Naive thymus-derived CD4-positive, alpha-beta T cell (primary cell): ENCODE measurements at regions of chr12 and their contacts with region 1.

Region 1: GRCh38 chr12:49188914-49189367 is at the start of gene TUBA1A:
- DNase-seq: peak; percentile 80 to 99 (median 98)
- ATAC-seq: peak; percentile 93
- H3K4me3 ChIP-seq: peak within 1 kb of the TSS; percentile 91
- H3K4me3 Mint-ChIP-seq: peak within 1 kb of the TSS; percentile 94 to 99 (median 98)
- H3K27ac ChIP-seq: peak within 1 kb of the TSS; percentile 99
- H3K27ac Mint-ChIP-seq: peak within 1 kb of the TSS; percentile 98 to 100 (median 99)
- H3K4me1 ChIP-seq: peaks cover 7 to 12% of the 10 kb centered on the region in 2 donors
- H3K4me1 Mint-ChIP-seq: peaks cover 11 to 32% (median 26%) of the 10 kb centered on the region in 7 donors
- H3K27me3 ChIP-seq: no peaks in the 10 kb centered on the region
- H3K27me3 Mint-ChIP-seq: peaks cover 0 to 5% (median 0%) of the 10 kb centered on the region in 5 donors
- total RNA-seq, gene TUBA1A: 61.8 to 492 (median 98.8) TPM

Region 2: DNA sequence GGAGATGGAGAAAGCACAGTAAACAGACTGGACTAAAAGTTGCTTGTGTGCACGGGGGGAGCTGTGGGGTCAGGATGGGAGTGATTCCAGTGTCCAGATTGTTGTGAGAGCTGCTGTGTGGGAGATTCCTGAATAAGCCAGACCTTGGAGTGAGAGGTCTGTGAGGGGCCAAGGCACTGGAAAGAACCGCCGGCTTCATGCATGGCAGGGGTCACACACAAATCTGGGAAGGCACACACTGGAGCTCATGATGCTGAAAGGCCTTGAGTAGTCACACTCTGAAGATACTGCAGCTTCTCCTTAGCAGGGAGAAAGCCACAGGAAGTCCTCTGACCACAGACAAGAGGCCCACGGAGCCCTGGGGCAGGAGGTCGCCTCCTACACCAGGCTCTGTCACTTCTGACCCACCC is 423.2 kb before region 1 on chr12:
- CTCF ChIA-PET with region 1: no interaction called
- POLR2A ChIA-PET with region 1: no interaction called
- intact Hi-C with region 1: no loop called
- DNase-seq: peak in 1 of 9 donors; percentile 44
- ATAC-seq: peak; percentile 69
- H3K4me3 ChIP-seq: no peak overlapping the region
- H3K4me3 Mint-ChIP-seq: peak overlapping the region in 1 of 10 donors; percentile 62
- H3K27ac ChIP-seq: no peak overlapping the region
- H3K27ac Mint-ChIP-seq: no peak overlapping the region
- H3K4me1 ChIP-seq: no peaks in the 10 kb centered on the region
- H3K4me1 Mint-ChIP-seq: peaks cover 0 to 21% (median 10%) of the 10 kb centered on the region in 7 donors
- H3K27me3 ChIP-seq: no peaks in the 10 kb centered on the region
- H3K27me3 Mint-ChIP-seq: peaks cover 0 to 9% (median 0%) of the 10 kb centered on the region in 5 donors

Region 3: DNA sequence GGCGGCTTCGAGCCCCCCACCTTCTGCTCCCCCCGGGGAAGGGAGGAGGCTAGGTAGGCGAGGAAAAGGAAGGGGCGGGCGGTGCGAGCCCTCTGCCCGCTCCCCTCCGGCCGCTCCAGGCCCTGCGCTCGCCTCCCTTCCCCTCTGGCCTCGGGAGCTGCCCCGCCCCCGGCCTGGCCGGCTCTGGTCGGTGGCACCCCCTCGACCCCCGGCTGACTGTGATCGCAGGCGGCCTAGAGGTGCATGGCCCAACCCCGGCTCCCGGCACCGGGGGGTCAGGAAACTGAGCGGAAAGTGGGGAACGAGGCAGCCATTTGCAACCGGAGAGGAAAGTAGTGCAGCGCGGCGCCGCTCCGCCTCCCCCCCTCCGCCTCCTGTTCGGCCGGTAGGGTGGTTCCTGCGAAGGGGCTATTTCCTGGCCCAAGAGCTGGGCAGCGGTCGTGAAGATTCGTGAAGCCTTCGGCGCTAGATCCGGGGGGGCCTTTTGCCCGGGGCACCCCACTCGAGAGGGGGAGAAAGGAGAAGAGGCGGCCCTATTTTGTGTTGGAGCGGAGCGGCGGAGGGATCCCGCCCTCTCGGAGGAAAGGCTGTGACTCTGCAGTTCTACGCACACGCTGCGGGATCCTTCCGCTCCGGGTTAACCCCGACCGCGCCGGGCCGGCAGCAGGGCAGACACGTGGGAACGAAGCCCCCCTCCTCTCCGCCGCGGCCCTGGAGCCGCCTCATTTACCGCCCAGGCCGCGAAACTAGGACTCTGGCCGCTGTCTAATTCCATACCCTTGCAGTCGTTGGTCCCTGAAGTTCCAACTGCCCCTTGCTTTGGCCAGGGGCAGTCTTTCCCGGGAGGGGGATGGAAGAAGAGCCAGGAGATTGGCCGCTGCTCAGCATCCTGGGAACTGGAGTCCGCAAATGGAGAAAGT is 128.4 kb before region 1 on chr12 and contains the start of gene KMT2D:
- CTCF ChIA-PET with region 1: interaction called, 3 read pairs
- POLR2A ChIA-PET with region 1: interaction called, 4 read pairs
- intact Hi-C with region 1: loop called (anchors 1 to 5 kb)
- DNase-seq: peak; percentile 80 to 94 (median 91)
- ATAC-seq: peak; percentile 86
- H3K4me3 ChIP-seq: peak within 1 kb of the TSS; percentile 87
- H3K4me3 Mint-ChIP-seq: peak within 1 kb of the TSS; percentile 91 to 98 (median 95)
- H3K27ac ChIP-seq: peak within 1 kb of the TSS; percentile 87
- H3K27ac Mint-ChIP-seq: peak within 1 kb of the TSS; percentile 90 to 99 (median 97)
- H3K4me1 ChIP-seq: peaks cover 38 to 40% of the 10 kb centered on the region in 2 donors
- H3K4me1 Mint-ChIP-seq: peaks cover 44 to 55% (median 51%) of the 10 kb centered on the region in 7 donors
- H3K27me3 ChIP-seq: no peaks in the 10 kb centered on the region
- H3K27me3 Mint-ChIP-seq: no peaks in the 10 kb centered on the region
- total RNA-seq, gene KMT2D: 129 to 167 (median 151) TPM

Region 4: DNA sequence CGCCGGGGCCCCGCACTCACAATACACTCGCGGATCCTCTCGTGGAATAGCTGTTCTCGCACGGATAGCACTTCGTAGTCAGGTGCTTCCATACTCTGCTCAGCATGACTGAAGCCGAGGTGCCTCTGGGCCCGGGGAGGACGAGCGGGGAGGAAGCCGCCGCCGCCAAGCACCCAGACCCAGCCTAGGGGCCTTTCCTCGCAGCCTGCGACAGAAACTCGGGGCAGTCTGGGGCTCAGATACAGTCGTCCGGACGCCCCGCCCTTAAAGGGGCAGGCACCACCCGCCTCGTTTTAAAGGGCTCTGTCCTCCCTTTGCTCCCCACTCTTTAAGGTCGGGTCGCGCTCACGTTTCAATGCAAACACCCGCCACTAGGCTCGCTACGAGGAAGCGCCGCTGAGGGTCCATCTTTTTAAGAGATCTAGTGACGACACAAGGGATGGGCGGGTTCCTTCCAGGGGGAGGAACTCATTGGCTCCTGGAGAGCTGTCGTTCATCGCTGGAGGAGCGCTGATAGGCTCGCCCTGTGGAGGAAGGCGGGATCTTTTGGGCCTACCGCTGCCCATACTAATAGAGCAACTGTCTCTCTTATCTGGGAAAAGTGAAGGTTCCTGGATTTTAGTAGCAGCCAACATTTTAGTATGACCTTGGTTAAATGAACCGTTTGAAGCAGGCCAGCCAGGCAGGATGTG is 78.3 kb before region 1 on chr12 and contains the start of gene LMBR1L:
- CTCF ChIA-PET with region 1: interaction called, 3 read pairs
- POLR2A ChIA-PET with region 1: interaction called, 47 read pairs
- intact Hi-C with region 1: loop called (anchors 1 kb)
- DNase-seq: peak; percentile 76 to 98 (median 96)
- ATAC-seq: peak; percentile 96
- H3K4me3 ChIP-seq: peak within 1 kb of the TSS; percentile 76
- H3K4me3 Mint-ChIP-seq: peak within 1 kb of the TSS; percentile 95 to 100 (median 98)
- H3K27ac ChIP-seq: peak within 1 kb of the TSS; percentile 95
- H3K27ac Mint-ChIP-seq: peak within 1 kb of the TSS; percentile 96 to 99 (median 99)
- H3K4me1 ChIP-seq: peaks cover 14 to 19% of the 10 kb centered on the region in 2 donors
- H3K4me1 Mint-ChIP-seq: peaks cover 14 to 48% (median 44%) of the 10 kb centered on the region in 7 donors
- H3K27me3 ChIP-seq: no peaks in the 10 kb centered on the region
- H3K27me3 Mint-ChIP-seq: no peaks in the 10 kb centered on the region
- total RNA-seq, gene LMBR1L: 67.4 to 328 (median 263) TPM

Region 5: DNA sequence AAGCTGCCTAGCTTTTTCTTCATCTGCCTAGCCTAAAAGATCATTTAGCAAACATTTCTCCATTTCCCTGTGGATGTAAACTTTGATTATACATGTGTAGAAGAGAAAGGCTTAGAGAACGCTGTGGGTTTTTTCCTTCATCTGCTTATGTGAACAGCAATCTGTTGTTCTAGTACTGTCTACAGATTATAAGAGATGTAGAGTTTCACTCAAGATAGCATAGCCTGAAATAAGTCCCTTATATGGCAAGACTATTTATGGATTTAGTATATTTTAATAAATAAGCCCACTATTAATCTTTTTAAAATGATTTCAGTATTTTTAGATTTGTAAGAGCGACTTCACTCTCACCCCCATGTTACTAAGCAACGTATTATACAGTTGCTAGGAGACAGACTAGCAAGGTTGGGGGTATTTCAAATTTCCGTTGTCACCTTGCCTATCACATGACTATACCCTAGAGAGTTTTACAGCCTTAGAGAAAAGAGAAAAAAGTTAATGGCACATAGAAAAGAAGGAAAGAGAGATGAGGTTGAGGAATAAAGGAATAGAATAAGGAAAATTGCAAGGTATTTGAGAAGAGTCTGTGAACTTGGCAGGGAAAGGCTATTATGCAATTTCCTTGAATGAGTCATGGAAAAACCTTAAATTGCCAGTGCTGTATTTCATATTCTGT is 12.1 kb after region 1 on chr12:
- CTCF ChIA-PET with region 1: no interaction called
- POLR2A ChIA-PET with region 1: interaction called, 21 read pairs
- intact Hi-C with region 1: loop called (anchors 1 kb)
- DNase-seq: peak in 6 of 9 donors; percentile 30 to 64 (median 46)
- ATAC-seq: peak; percentile 92
- H3K4me3 ChIP-seq: no peak overlapping the region
- H3K4me3 Mint-ChIP-seq: no peak overlapping the region
- H3K27ac ChIP-seq: no peak overlapping the region
- H3K27ac Mint-ChIP-seq: peak overlapping the region in 4 of 9 donors; percentile 4 to 75 (median 22)
- H3K4me1 ChIP-seq: peaks cover 0 to 6% of the 10 kb centered on the region in 2 donors
- H3K4me1 Mint-ChIP-seq: peaks cover 7 to 15% (median 14%) of the 10 kb centered on the region in 7 donors
- H3K27me3 ChIP-seq: no peaks in the 10 kb centered on the region
- H3K27me3 Mint-ChIP-seq: peaks cover 0 to 19% (median 0%) of the 10 kb centered on the region in 5 donors

Region 6: GRCh38 chr12:49322708-49323523 is 134.0 kb after region 1 on chr12 and contains the start of gene TROAP:
- CTCF ChIA-PET with region 1: no interaction called
- POLR2A ChIA-PET with region 1: no interaction called
- intact Hi-C with region 1: loop called in 1 of 2 experiments (anchors 2 kb)
- DNase-seq: peak; percentile 89 to 98 (median 96)
- ATAC-seq: peak; percentile 97
- H3K4me3 ChIP-seq: peak within 1 kb of the TSS; percentile 75
- H3K4me3 Mint-ChIP-seq: peak within 1 kb of the TSS; percentile 86 to 98 (median 92)
- H3K27ac ChIP-seq: peak within 1 kb of the TSS; percentile 72
- H3K27ac Mint-ChIP-seq: peak within 1 kb of the TSS; percentile 29 to 95 (median 83)
- H3K4me1 ChIP-seq: peaks cover 5 to 14% of the 10 kb centered on the region in 2 donors
- H3K4me1 Mint-ChIP-seq: peaks cover 16 to 25% (median 19%) of the 10 kb centered on the region in 7 donors
- H3K27me3 ChIP-seq: no peaks in the 10 kb centered on the region
- H3K27me3 Mint-ChIP-seq: peaks cover 0 to 5% (median 0%) of the 10 kb centered on the region in 5 donors
- total RNA-seq, gene TROAP: 0.83 to 58.2 (median 1.3) TPM in 4 of 5 experiments, not detected in the other

Region 7: GRCh38 chr12:49623142-49623904 is 434.4 kb after region 1 on chr12 and contains the start of gene PRPF40B:
- CTCF ChIA-PET with region 1: no interaction called
- POLR2A ChIA-PET with region 1: no interaction called
- intact Hi-C with region 1: loop called in 1 of 2 experiments (anchors 2 kb)
- DNase-seq: peak; percentile 82 to 92 (median 89)
- ATAC-seq: peak; percentile 89
- H3K4me3 ChIP-seq: peak within 1 kb of the TSS; percentile 42
- H3K4me3 Mint-ChIP-seq: peak within 1 kb of the TSS; percentile 86 to 96 (median 91)
- H3K27ac ChIP-seq: peak within 1 kb of the TSS; percentile 66
- H3K27ac Mint-ChIP-seq: peak within 1 kb of the TSS; percentile 81 to 95 (median 91)
- H3K4me1 ChIP-seq: peaks cover 6 to 22% of the 10 kb centered on the region in 2 donors
- H3K4me1 Mint-ChIP-seq: peaks cover 19 to 29% (median 23%) of the 10 kb centered on the region in 7 donors
- H3K27me3 ChIP-seq: no peaks in the 10 kb centered on the region
- H3K27me3 Mint-ChIP-seq: peaks cover 0 to 32% (median 0%) of the 10 kb centered on the region in 5 donors
- total RNA-seq, gene PRPF40B: 7.8 to 24.1 (median 12.1) TPM